AG04450 (cell line): ENCODE measurements at regions of chr6 and their contacts with region 1.

Region 1: DNA sequence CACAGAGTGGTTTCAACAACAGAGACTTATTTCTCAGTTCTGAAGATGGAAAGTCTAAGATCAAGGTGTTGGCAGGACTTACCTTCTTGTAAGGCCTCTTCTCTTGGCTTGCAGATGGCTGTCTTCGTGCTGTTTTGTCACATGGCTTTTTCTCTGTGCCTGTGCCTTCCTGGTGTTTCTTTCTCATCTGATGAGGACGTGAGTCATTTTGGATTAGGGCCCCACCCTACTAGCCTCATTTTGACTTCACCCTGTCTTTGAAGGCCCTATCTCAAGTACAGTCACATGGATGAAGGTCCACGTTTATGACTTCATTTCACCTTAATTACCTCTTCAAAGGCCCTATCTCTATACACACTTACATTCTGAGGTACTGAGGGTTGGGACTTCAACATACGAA is 41.4 kb upstream of the LAMA2 start:
- DNase-seq: no peak
- H3K4me3 ChIP-seq: no peak overlapping the region
- H3K27ac ChIP-seq: no peak overlapping the region
- H3K27me3 ChIP-seq: no peaks in the 10 kb centered on the region
- CTCF ChIP-seq: no peak

Region 2: DNA sequence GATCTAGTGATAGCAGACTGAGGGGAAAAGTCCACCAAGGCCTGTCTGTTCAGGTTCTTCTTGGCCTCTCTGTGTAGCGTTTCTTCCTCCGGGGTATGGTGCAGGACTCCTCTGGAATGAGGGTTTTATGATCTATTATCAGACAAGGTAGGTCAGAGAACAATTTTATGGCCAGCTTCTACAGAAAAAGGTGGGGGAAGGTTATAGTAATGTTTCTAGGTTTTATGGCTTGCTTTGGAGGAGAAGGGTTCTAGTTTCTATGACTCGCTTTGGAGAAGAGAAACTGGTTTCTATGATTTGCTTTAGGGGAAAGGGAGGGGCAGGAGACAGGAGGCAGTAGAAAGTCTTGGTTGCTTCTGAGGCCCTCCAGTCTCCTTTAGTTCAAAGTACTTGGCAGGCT is 103.4 kb before region 1 on chr6:
- CTCF ChIA-PET with region 1: no interaction called
- POLR2A ChIA-PET with region 1: no interaction called
- DNase-seq: no peak
- H3K4me3 ChIP-seq: no peak overlapping the region
- H3K27ac ChIP-seq: no peak overlapping the region
- H3K27me3 ChIP-seq: no peaks in the 10 kb centered on the region
- CTCF ChIP-seq: no peak

Region 3: GRCh38 chr6:129730477-129731165 is 889.1 kb after region 1 on chr6:
- CTCF ChIA-PET with region 1: interaction called, 10 read pairs
- POLR2A ChIA-PET with region 1: no interaction called
- DNase-seq: no peak
- H3K4me3 ChIP-seq: no peak overlapping the region
- H3K27ac ChIP-seq: no peak overlapping the region
- H3K27me3 ChIP-seq: no peaks in the 10 kb centered on the region
- CTCF ChIP-seq: peak; percentile 37